CD14-positive monocyte (primary cell): ENCODE measurements at regions of chr1 and their contacts with region 1.

Region 1: GRCh38 chr1:236045771-236046170 is 19.1 kb downstream of the NID1 start:
- DNase-seq: no peak
- H3K4me3 ChIP-seq: no peak overlapping the region
- H3K4me3 Mint-ChIP-seq: no peak overlapping the region
- H3K27ac ChIP-seq: no peak overlapping the region
- H3K27ac Mint-ChIP-seq: no peak overlapping the region
- H3K4me1 ChIP-seq: peaks cover 0 to 5% of the 10 kb centered on the region in 2 donors
- H3K4me1 Mint-ChIP-seq: peaks cover 6% of the 10 kb centered on the region
- H3K27me3 ChIP-seq: no peaks in the 10 kb centered on the region
- H3K27me3 Mint-ChIP-seq: peaks cover 2% of the 10 kb centered on the region in 3 donors
- CTCF ChIP-seq: no peak

Region 2: GRCh38 chr1:236064674-236065508 is 19.1 kb after region 1 on chr1 and contains the start of gene NID1:
- intact Hi-C with region 1: loop called in 1 of 2 experiments (anchors 2 kb)
- DNase-seq: peak; percentile 44 to 56 (median 51)
- H3K4me3 ChIP-seq: peak within 1 kb of the TSS; percentile 67 to 82 (median 68)
- H3K4me3 Mint-ChIP-seq: peak within 1 kb of the TSS; percentile 87 to 92
- H3K27ac ChIP-seq: peak within 1 kb of the TSS; percentile 31 to 88
- H3K27ac Mint-ChIP-seq: peak within 1 kb of the TSS in 6 of 7 donors; percentile 14 to 91 (median 72)
- H3K4me1 ChIP-seq: peaks cover 37 to 52% of the 10 kb centered on the region in 2 donors
- H3K4me1 Mint-ChIP-seq: peaks cover 35% of the 10 kb centered on the region
- H3K27me3 ChIP-seq: peaks cover 4 to 13% of the 10 kb centered on the region in 2 donors
- H3K27me3 Mint-ChIP-seq: peaks cover 21 to 43% (median 36%) of the 10 kb centered on the region in 3 donors
- CTCF ChIP-seq: peak; percentile 52
- polyA plus RNA-seq, gene NID1: 6.8 to 19.7 (median 14.4) TPM